ENCODE measurements at regions of chr4 and their contacts with region 1.

Region 1: GRCh38 chr4:79042079-79042674 is 102.9 kb upstream of the PAQR3 start:
- ATAC-seq: peak in 4 of 8 experiments; percentile 33 to 61 (median 44)
- H3K4me3 ChIP-seq: no peak overlapping the region
- H3K27ac ChIP-seq: no peak overlapping the region
- H3K4me1 ChIP-seq: peaks cover 26 to 48% of the 10 kb centered on the region in 2 donors

Region 2: GRCh38 chr4:79241846-79242245 is 199.7 kb after region 1 on chr4:
- in situ Hi-C with region 1: loop called in 1 of 9 experiments (anchors 25 kb)
- ATAC-seq: peak in 4 of 8 experiments; percentile 14 to 83 (median 67)
- H3K4me3 ChIP-seq: no peak overlapping the region
- H3K27ac ChIP-seq: no peak overlapping the region
- H3K4me1 ChIP-seq: peaks cover 8 to 18% of the 10 kb centered on the region in 2 donors

Region 3: GRCh38 chr4:79576429-79576753 is 534.2 kb after region 1 on chr4:
- in situ Hi-C with region 1: loop called in 2 of 9 experiments (anchors 25 kb)
- ATAC-seq: peak; percentile 81 to 98 (median 94)
- H3K4me3 ChIP-seq: no peak overlapping the region
- H3K27ac ChIP-seq: no peak overlapping the region
- H3K4me1 ChIP-seq: peaks cover 0 to 3% of the 10 kb centered on the region in 2 donors